ENCODE measurements at regions of chr7 and their contacts with region 1.

Region 1: GRCh38 chr7:14419531-14419930 is 430.1 kb upstream of the ETV1 start:
- DNase-seq: no peak
- ATAC-seq: no peak
- H3K4me3 ChIP-seq: no peak overlapping the region
- H3K27ac ChIP-seq: peak overlapping the region in 3 of 12 donors; percentile 15 to 48 (median 18)
- H3K4me1 ChIP-seq: peaks cover 0 to 12% (median 0%) of the 10 kb centered on the region in 12 donors
- H3K27me3 ChIP-seq: no peaks in the 10 kb centered on the region
- CTCF ChIP-seq: no peak
- POLR2A ChIP-seq: no peak

Region 2: DNA sequence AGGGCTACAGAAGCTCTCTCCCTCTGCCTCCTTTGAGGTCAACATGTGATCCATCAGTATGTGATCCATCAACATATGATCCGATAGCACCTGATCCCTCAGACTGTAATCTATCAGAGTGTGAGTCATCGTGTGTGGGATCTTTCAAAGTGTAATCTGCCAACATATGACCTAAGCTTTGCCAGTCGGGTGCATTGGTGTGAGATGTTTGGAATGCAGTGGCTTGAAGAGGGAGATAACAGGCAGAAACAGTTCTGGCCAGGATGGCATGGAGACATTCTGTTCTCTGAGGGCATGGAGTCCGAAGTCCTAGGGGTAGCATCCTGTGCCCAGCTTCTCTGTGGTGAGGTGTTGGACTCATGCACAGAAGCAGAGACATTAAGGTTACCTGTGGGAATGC is 212.4 kb before region 1 on chr7:
- intact Hi-C with region 1: loop called in 2 of 10 experiments (anchors 5 to 10 kb)
- DNase-seq: peak in 4 of 5 donors; percentile 11 to 57 (median 25)
- ATAC-seq: peak; percentile 90 to 97 (median 96)
- H3K4me3 ChIP-seq: no peak overlapping the region
- H3K27ac ChIP-seq: peak overlapping the region in 5 of 12 donors; percentile 5 to 77 (median 63)
- H3K4me1 ChIP-seq: peaks cover 0 to 10% (median 0%) of the 10 kb centered on the region in 12 donors
- H3K27me3 ChIP-seq: no peaks in the 10 kb centered on the region
- CTCF ChIP-seq: no peak
- POLR2A ChIP-seq: no peak

Region 3: DNA sequence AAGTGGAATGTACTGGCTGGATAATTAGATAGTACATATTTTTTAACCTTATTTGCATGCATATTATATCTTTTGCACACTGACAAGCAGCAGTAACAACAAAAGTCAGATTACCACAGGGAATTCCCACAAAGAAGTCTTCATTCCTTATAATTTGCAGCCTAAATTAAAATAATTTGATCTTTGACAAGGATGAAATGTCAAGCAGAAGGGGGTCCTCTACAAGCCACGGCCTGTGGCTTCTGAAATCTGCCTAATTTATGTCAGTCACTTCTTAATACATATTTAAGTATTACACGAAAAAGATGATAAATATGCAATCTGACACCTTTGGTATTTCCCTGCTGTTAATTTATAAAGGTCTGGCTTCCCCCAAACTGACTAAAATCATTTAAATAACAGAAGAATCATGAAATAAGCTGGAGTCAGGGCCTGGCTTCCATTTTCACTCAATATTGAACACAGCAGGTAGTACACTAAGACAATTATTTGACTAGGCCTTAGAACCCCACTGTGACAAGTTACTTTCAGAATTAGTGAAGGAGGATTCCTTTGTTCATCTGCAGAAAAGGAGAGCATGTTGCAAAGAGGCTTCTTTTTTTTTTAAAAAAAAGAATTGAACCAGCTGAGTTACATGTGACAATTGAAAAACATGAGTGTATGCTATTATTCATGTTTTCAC is 79.0 kb before region 1 on chr7:
- intact Hi-C with region 1: loop called in 2 of 10 experiments (anchors 5 to 10 kb)
- DNase-seq: no peak
- ATAC-seq: no peak
- H3K4me3 ChIP-seq: no peak overlapping the region
- H3K27ac ChIP-seq: no peak overlapping the region
- H3K4me1 ChIP-seq: peaks cover 0 to 5% (median 0%) of the 10 kb centered on the region in 12 donors
- H3K27me3 ChIP-seq: no peaks in the 10 kb centered on the region
- CTCF ChIP-seq: no peak
- POLR2A ChIP-seq: no peak